Activated CD4-positive, alpha-beta memory T cell treated with anti-CD3 and anti-CD28 coated beads for 36 hours (primary cell): ENCODE measurements at regions of chr1 and their contacts with region 1.

Region 1: GRCh38 chr1:36516372-36517325 is 33.9 kb upstream of the CSF3R start:
- DNase-seq: peak; percentile 56
- H3K4me3 Mint-ChIP-seq: no peak overlapping the region
- H3K27ac Mint-ChIP-seq: no peak overlapping the region
- H3K4me1 Mint-ChIP-seq: no peaks in the 10 kb centered on the region
- H3K27me3 Mint-ChIP-seq: no peaks in the 10 kb centered on the region

Region 2: DNA sequence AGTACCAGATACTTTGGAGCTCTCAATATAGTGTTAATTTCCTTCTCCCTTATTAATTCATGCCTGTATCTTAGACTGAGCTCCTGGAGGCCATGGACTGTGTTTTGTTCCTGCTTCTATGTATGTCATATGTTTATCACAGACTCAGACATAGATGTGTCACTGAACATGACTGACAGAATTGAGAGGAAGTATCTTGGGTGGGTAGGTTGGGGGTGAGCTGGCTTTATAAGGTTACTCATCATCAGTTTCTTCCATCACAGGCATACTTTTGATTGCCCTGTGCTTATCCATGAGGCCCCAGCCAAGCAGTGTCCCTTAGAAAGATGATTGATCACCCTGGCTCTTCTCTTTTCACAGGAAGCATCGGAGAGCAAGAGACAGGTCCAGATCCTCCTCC is 216.1 kb before region 1 on chr1:
- CTCF ChIA-PET with region 1: no interaction called
- POLR2A ChIA-PET with region 1: no interaction called
- intact Hi-C with region 1: no loop called
- DNase-seq: peak; percentile 44
- H3K4me3 Mint-ChIP-seq: peak overlapping the region; percentile 3
- H3K27ac Mint-ChIP-seq: peak overlapping the region; percentile 95
- H3K4me1 Mint-ChIP-seq: peaks cover 61% of the 10 kb centered on the region
- H3K27me3 Mint-ChIP-seq: no peaks in the 10 kb centered on the region

Region 3: GRCh38 chr1:36488826-36489225 is 27.8 kb before region 1 on chr1:
- CTCF ChIA-PET with region 1: no interaction called
- POLR2A ChIA-PET with region 1: no interaction called
- intact Hi-C with region 1: no loop called
- DNase-seq: no peak
- H3K4me3 Mint-ChIP-seq: no peak overlapping the region
- H3K27ac Mint-ChIP-seq: no peak overlapping the region
- H3K4me1 Mint-ChIP-seq: peaks cover 4% of the 10 kb centered on the region
- H3K27me3 Mint-ChIP-seq: peaks cover 3% of the 10 kb centered on the region

Region 4: DNA sequence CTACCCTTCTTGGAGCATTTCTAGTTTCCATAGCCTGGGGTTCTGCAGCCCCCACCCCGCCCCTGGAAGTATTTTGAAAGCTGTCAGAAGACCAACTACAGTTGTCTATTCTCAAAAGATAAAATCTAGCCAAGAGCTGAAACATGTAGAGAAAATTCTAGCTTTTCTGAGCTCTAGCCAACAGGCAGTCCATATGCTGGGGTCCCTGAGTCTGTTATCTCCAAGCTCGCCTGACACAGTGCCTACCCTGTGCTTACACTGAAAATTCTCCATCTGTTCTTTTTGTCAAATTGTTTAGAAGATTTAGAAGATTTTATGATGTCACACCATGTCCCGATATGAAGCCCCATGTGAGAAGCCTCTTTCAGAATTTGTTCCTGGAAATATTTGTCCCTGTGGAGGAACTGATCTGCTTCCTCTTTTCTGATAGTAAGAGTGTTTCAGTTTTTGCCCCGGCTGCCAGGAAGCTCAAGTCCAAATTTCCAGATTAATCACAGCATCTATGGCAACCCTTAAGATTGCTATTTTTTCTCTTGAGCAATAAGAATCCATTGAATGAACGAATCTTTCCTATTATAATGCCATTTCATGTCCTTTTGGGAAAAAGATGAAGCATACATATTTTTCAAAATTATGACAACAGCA is 10.3 kb before region 1 on chr1:
- CTCF ChIA-PET with region 1: interaction called, 17 read pairs
- POLR2A ChIA-PET with region 1: no interaction called
- intact Hi-C with region 1: no loop called
- DNase-seq: no peak
- H3K4me3 Mint-ChIP-seq: no peak overlapping the region
- H3K27ac Mint-ChIP-seq: no peak overlapping the region
- H3K4me1 Mint-ChIP-seq: no peaks in the 10 kb centered on the region
- H3K27me3 Mint-ChIP-seq: peaks cover 21% of the 10 kb centered on the region

Region 5: GRCh38 chr1:36534711-36535412 is 18.2 kb after region 1 on chr1:
- CTCF ChIA-PET with region 1: interaction called, 28 read pairs
- POLR2A ChIA-PET with region 1: no interaction called
- intact Hi-C with region 1: no loop called
- DNase-seq: no peak
- H3K4me3 Mint-ChIP-seq: no peak overlapping the region
- H3K27ac Mint-ChIP-seq: no peak overlapping the region
- H3K4me1 Mint-ChIP-seq: no peaks in the 10 kb centered on the region
- H3K27me3 Mint-ChIP-seq: peaks cover 18% of the 10 kb centered on the region

Region 6: DNA sequence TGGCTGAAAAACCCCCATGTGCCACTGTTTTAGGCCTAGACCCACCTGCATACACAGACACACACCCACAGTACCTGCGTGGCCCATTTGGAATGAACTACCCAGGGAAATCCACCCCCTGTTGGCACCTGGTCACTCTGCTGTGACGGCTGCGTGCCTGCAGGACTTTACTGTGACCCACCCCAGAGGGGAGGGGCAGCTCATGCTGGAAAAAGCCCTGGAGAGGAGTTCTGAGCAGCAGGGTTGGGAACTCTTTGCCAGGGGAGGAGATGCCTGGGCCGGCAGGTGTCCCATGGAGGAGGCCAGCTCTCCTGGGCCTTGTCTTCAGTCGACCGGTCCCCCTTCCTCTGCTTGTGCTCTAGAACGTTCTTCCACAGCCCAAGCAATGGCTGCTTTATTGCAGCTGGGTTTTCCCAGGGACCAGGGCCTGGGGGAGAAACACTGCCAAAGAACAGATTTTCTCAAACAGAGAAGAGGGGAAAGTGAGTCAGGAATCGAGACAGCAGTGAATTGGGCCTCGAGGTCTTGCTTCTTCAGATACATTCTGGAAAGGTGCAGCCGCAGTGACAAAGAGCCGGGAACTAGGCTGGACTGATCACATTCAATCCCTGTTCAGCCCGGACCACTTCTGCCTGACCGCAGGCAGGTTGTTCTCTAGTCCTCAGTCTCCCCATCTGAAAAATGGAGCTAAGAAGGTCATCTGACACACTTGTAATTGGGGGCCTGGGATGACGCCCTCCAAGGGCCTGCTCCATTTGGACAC is 53.5 kb after region 1 on chr1:
- CTCF ChIA-PET with region 1: interaction called, 12 read pairs
- POLR2A ChIA-PET with region 1: no interaction called
- intact Hi-C with region 1: no loop called
- DNase-seq: no peak
- H3K4me3 Mint-ChIP-seq: no peak overlapping the region
- H3K27ac Mint-ChIP-seq: no peak overlapping the region
- H3K4me1 Mint-ChIP-seq: no peaks in the 10 kb centered on the region
- H3K27me3 Mint-ChIP-seq: peaks cover 23% of the 10 kb centered on the region

Region 7: GRCh38 chr1:36609241-36610027 is 92.8 kb after region 1 on chr1:
- CTCF ChIA-PET with region 1: interaction called, 11 read pairs
- POLR2A ChIA-PET with region 1: no interaction called
- intact Hi-C with region 1: no loop called
- DNase-seq: peak; percentile 61
- H3K4me3 Mint-ChIP-seq: no peak overlapping the region
- H3K27ac Mint-ChIP-seq: no peak overlapping the region
- H3K4me1 Mint-ChIP-seq: peaks cover 22% of the 10 kb centered on the region
- H3K27me3 Mint-ChIP-seq: peaks cover 2% of the 10 kb centered on the region

Region 8: DNA sequence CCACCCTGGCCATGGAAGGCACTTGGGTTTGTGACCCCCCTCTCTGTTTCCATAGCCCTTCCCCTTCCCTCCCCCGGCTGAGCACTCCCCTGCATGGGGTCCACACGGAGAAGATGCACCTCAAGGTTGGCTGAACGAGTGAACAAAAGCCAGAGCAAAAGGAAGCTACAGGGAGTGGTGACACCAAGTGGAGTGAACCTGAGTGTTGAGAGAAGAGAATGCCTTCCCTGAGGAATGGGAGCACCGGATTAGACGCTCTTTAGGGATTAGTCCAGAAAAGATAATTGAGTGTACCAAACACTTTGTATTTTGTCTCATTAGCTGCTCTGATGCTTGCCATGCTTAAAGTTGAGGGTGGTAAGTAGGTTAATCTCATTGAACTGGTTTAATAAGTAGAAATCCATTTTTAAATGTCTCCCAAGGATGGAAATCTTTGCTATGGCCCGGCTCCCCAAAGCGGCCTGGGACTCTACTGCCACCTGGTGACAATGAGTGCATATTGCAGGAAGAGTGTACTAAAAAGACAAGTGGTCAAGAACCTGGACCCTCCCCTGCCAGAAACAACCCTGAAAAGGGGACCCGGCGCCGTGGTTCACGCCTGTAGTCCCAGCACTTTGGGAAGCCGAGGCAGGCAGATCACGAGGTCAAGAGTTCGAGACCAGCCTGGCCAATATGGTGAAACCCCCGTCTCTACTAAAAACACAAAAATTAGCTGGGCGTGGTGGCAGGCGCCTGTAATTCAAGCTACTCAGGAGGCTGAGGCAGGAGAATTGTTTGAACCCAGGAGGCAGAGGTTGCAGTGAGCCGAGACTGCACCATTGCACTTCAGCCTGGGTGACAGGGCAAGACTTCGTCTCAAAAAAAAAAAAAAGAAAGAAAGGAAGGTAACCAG is 807.1 kb after region 1 on chr1:
- CTCF ChIA-PET with region 1: interaction called, 16 read pairs
- POLR2A ChIA-PET with region 1: no interaction called
- intact Hi-C with region 1: loop called (anchors 5 kb)
- DNase-seq: peak; percentile 45
- H3K4me3 Mint-ChIP-seq: no peak overlapping the region
- H3K27ac Mint-ChIP-seq: no peak overlapping the region
- H3K4me1 Mint-ChIP-seq: no peaks in the 10 kb centered on the region
- H3K27me3 Mint-ChIP-seq: peaks cover 27% of the 10 kb centered on the region

Region 9: GRCh38 chr1:37410105-37410504 is 893.5 kb after region 1 on chr1:
- CTCF ChIA-PET with region 1: no interaction called
- POLR2A ChIA-PET with region 1: no interaction called
- intact Hi-C with region 1: no loop called
- DNase-seq: no peak
- H3K4me3 Mint-ChIP-seq: no peak overlapping the region
- H3K27ac Mint-ChIP-seq: no peak overlapping the region
- H3K4me1 Mint-ChIP-seq: no peaks in the 10 kb centered on the region
- H3K27me3 Mint-ChIP-seq: peaks cover 2% of the 10 kb centered on the region